MCF 10A (cell line): ENCODE measurements at regions of chr17 and their contacts with region 1.

Region 1: DNA sequence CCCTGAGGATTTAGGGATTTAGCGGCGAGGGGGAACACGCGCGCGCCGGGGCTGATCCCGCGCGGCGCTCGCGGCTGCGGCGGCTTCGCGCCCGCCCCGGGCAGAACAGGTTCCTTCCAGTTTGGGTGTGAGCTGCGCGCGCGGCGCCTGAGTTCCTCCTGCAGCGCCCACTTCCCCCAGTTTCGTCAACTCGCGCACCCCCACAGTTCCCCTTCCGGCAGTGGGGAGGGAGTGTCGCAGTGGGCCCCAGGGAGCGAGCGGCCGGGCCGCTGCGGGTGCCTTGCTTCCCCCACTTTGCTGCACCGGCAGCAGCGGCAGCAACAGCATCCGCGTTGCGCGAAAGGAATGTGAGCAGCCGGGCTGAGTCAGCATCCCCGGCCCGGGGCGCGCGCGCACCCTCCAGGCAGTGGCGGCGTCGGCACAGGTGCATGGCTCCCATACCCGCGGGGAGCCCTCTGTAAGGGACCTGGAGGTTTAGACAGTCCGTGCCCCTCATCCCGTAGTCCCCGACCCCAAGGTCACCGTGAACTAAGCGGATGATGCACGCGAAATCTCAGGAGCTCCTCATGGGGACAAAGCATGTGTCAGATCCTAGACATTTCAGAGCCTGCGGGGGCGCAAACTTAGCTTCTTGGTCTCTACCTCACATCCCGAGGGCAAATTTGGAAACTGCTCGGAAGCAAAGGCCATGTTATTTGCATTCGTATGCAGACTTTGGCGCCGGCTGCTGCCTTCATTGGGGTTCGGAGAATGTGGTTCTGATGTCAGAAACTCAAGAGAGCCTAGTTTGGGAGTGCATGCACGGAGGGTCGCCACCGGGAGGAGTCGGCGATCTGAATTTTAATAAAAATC is 775 bp downstream of the ARSG start:
- DNase-seq: peak; percentile 73
- H3K4me3 Mint-ChIP-seq: peak overlapping the region; percentile 74
- H3K27ac Mint-ChIP-seq: no peak overlapping the region
- H3K4me1 Mint-ChIP-seq: no peaks in the 10 kb centered on the region
- H3K27me3 Mint-ChIP-seq: no peaks in the 10 kb centered on the region
- CTCF ChIP-seq: no peak

Region 2: DNA sequence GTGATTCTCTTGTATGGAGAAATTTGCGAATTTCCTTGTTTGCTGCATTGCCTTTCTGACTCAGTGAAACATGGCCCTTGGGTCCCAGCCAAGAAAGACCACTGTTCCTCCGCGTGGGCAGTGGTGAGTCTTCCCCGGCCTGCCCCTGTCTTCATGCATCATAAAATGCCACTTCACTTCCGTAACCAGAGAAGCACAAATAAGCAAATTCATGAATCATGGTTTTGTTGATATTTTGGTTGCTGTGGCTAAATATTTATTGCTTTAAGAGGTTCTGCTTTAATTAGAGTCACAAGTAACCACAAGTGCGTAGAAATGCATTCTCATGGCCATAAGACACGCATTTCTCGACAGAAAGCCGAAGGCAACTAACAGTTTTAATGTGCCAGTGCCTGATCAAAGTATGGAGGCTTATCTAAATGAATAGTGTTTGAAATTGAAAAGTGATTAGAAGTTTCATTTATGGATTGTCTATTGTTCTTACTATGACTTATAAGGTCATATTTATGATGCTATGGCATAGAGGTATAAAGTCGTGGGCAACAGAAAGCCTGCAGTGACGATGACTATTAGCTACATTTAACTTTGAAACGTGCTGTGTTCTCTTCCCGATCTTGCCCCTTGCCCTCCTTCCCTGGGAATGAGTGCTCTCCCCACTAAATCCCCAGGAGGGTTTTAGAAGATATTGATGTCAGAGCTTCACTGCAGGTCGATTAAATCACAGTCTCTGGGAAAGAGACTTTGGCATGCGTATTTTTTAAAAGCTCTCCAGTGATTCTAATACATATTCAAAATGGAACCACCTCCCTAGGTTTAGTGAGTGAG is 89.2 kb after region 1 on chr17:
- CTCF ChIA-PET with region 1: no interaction called
- POLR2A ChIA-PET with region 1: no interaction called
- intact Hi-C with region 1: loop called (anchors 5 kb)
- DNase-seq: peak; percentile 93
- H3K4me3 Mint-ChIP-seq: no peak overlapping the region
- H3K27ac Mint-ChIP-seq: no peak overlapping the region
- H3K4me1 Mint-ChIP-seq: peaks cover 25% of the 10 kb centered on the region
- H3K27me3 Mint-ChIP-seq: no peaks in the 10 kb centered on the region
- CTCF ChIP-seq: no peak

Region 3: DNA sequence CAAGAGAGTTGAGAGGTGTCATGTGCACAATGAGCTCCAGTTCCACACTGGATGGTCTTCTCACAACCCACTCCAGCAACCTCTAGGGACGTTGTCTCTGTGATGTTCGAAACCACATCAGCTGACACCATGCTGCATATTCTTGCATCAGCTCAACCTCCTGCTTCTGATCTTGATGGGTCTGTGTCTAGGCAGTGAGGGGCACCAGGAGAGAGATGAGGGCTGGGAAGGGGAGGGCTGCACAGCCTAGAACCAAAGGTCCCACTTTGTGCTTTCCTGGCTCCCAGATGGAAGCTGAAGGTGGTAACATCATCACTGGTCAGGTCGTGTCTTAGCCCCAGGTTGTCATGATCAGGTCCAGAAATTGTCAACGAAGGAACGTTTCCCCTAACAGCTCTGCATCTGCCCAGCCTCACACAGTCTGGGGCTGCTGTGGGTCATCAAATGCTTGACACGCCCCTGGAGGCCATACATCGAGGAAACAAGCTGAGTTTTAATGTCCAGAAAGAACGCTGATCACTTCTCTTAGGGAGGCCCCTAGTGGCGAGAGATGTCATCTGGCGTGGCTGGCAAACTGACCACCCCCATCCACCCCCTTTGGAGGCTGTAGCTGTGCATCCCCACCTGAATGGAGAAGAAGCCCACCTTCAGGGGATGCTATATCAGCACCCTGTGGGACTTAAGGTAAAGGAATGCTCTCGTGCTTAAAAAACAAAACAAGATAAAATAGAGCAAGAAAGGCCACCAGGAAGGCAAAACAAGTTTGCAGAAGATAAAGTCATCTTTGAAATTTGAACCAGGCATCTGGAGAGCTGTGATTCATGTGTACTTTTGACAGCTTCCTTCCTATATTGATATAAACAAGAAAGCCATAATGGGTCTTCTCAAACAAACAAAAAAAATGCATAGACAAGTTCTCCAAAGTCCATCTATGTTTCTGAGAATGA is 106.9 kb after region 1 on chr17:
- CTCF ChIA-PET with region 1: interaction called, 5 read pairs
- POLR2A ChIA-PET with region 1: no interaction called
- intact Hi-C with region 1: loop called (anchors 1 kb)
- DNase-seq: peak; percentile 82
- H3K4me3 Mint-ChIP-seq: no peak overlapping the region
- H3K27ac Mint-ChIP-seq: no peak overlapping the region
- H3K4me1 Mint-ChIP-seq: no peaks in the 10 kb centered on the region
- H3K27me3 Mint-ChIP-seq: no peaks in the 10 kb centered on the region
- CTCF ChIP-seq: peak; percentile 60

Region 4: GRCh38 chr17:68435876-68436842 is 144.1 kb after region 1 on chr17:
- CTCF ChIA-PET with region 1: interaction called, 4 read pairs
- POLR2A ChIA-PET with region 1: no interaction called
- intact Hi-C with region 1: loop called (anchors 1 kb)
- DNase-seq: peak; percentile 86
- H3K4me3 Mint-ChIP-seq: no peak overlapping the region
- H3K27ac Mint-ChIP-seq: no peak overlapping the region
- H3K4me1 Mint-ChIP-seq: peaks cover 9% of the 10 kb centered on the region
- H3K27me3 Mint-ChIP-seq: no peaks in the 10 kb centered on the region
- CTCF ChIP-seq: peak; percentile 82